Ascending aorta (tissue), 2 donors: ENCODE measurements at regions of chr22 and their contacts with region 1.

Region 1: GRCh38 chr22:31080848-31081649 is at the start of gene SMTN:
- DNase-seq: peak; percentile 63 to 96
- H3K4me3 ChIP-seq: peak within 1 kb of the TSS; percentile 70 to 89
- H3K27ac ChIP-seq: peak within 1 kb of the TSS; percentile 98
- H3K4me1 ChIP-seq: peaks cover 10 to 26% of the 10 kb centered on the region in 2 donors
- H3K27me3 ChIP-seq: no peaks in the 10 kb centered on the region
- CTCF ChIP-seq: no peak
- total RNA-seq, gene SMTN: 671 TPM

Region 2: DNA sequence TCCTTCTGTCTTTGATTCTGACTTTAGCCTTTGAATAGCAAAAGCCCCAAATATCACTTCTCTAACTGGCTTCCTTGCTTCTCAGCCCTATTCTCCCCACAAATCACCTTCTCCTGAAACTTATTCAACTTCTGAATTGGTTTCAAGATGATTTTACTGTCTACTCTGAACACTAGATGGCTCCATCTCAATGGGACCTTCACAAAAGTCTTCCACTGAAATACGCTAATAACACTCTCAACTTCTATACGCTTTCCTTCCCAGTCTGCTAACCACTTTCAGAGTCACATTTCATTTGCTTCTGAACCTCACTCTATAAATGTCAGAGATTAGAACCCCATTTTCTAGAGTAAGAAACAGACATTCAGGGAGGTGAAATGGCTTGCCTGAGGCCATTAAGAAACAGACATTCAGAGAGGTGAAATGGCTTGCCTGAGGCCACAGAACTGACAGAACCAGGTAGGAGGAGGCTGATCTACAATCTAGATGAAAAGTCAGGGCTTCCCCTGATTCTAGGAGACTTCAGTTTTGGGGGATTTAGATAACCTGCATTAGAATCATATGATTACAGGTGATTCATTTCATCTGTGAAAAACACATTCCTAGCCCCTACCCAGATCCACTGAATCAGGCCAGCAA is 133.1 kb before region 1 on chr22:
- intact Hi-C with region 1: loop called (anchors 1 kb)
- DNase-seq: no peak
- H3K4me3 ChIP-seq: peak overlapping the region in 1 of 2 donors; percentile 10
- H3K27ac ChIP-seq: peak overlapping the region; percentile 88 to 96
- H3K4me1 ChIP-seq: peaks cover 21 to 85% of the 10 kb centered on the region in 2 donors
- H3K27me3 ChIP-seq: no peaks in the 10 kb centered on the region
- CTCF ChIP-seq: peak; percentile 49 to 64 (median 59)

Region 3: GRCh38 chr22:30968924-30969539 is 112.0 kb before region 1 on chr22 and contains the start of gene TUG1:
- intact Hi-C with region 1: loop called (anchors 1 kb)
- DNase-seq: peak; percentile 97 to 99
- H3K4me3 ChIP-seq: peak within 1 kb of the TSS; percentile 84 to 96
- H3K27ac ChIP-seq: peak within 1 kb of the TSS; percentile 96
- H3K4me1 ChIP-seq: peaks cover 4 to 16% of the 10 kb centered on the region in 2 donors
- H3K27me3 ChIP-seq: no peaks in the 10 kb centered on the region
- CTCF ChIP-seq: no peak
- total RNA-seq, gene TUG1: 46.2 TPM

Region 4: GRCh38 chr22:31036671-31037550 is 44.1 kb before region 1 on chr22:
- intact Hi-C with region 1: loop called (anchors 2 kb)
- DNase-seq: peak in 1 of 2 donors; percentile 81
- H3K4me3 ChIP-seq: peak overlapping the region in 1 of 2 donors; percentile 40
- H3K27ac ChIP-seq: peak overlapping the region; percentile 87 to 89
- H3K4me1 ChIP-seq: peaks cover 14 to 43% of the 10 kb centered on the region in 2 donors
- H3K27me3 ChIP-seq: no peaks in the 10 kb centered on the region
- CTCF ChIP-seq: peak in 1 of 3 experiments; percentile 10

Region 5: DNA sequence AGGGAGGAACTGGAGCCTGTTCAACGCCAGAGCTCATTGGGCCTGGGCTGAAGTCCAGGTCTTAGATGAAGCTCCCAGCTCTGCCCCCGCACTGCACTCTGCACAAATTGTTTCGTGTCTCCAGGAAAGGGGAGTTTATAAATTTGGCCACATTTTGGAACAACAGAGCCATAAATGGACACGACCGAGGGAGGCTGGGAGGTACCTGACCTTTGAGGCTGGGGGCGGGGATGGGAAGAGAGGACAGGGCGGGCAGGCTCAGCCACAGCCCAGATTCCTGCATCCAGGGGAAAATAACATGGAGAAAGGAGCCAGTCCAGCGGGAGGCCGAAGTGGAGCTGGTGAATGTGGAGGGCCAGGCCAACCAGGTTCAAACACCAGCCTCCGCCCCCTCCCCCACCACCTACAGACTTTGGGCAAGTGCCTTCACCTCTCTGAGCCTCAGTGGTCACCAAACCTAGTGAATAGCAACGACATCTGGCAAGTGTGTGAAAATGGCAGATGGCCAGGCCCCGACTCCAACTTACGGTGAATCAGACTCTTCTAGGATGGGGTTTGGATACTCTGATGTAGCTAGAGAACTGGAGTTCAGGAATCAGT is 36.7 kb before region 1 on chr22:
- intact Hi-C with region 1: loop called (anchors 1 kb)
- DNase-seq: peak; percentile 30 to 92
- H3K4me3 ChIP-seq: peak overlapping the region in 1 of 2 donors; percentile 21
- H3K27ac ChIP-seq: peak overlapping the region; percentile 79 to 80
- H3K4me1 ChIP-seq: peaks cover 12 to 28% of the 10 kb centered on the region in 2 donors
- H3K27me3 ChIP-seq: no peaks in the 10 kb centered on the region
- CTCF ChIP-seq: no peak

Region 6: GRCh38 chr22:31055635-31056159 is 25.4 kb before region 1 on chr22:
- intact Hi-C with region 1: loop called (anchors 1 kb)
- DNase-seq: peak; percentile 76 to 97
- H3K4me3 ChIP-seq: no peak overlapping the region
- H3K27ac ChIP-seq: peak overlapping the region; percentile 89 to 91
- H3K4me1 ChIP-seq: peaks cover 6 to 32% of the 10 kb centered on the region in 2 donors
- H3K27me3 ChIP-seq: no peaks in the 10 kb centered on the region
- CTCF ChIP-seq: no peak

Region 7: GRCh38 chr22:31148953-31149627 is 68.0 kb after region 1 on chr22:
- intact Hi-C with region 1: loop called (anchors 2 kb)
- DNase-seq: peak in 1 of 2 donors; percentile 87
- H3K4me3 ChIP-seq: no peak overlapping the region
- H3K27ac ChIP-seq: peak overlapping the region; percentile 71 to 81
- H3K4me1 ChIP-seq: peaks cover 5 to 13% of the 10 kb centered on the region in 2 donors
- H3K27me3 ChIP-seq: no peaks in the 10 kb centered on the region
- CTCF ChIP-seq: peak; percentile 90 to 93 (median 90)

Region 8: DNA sequence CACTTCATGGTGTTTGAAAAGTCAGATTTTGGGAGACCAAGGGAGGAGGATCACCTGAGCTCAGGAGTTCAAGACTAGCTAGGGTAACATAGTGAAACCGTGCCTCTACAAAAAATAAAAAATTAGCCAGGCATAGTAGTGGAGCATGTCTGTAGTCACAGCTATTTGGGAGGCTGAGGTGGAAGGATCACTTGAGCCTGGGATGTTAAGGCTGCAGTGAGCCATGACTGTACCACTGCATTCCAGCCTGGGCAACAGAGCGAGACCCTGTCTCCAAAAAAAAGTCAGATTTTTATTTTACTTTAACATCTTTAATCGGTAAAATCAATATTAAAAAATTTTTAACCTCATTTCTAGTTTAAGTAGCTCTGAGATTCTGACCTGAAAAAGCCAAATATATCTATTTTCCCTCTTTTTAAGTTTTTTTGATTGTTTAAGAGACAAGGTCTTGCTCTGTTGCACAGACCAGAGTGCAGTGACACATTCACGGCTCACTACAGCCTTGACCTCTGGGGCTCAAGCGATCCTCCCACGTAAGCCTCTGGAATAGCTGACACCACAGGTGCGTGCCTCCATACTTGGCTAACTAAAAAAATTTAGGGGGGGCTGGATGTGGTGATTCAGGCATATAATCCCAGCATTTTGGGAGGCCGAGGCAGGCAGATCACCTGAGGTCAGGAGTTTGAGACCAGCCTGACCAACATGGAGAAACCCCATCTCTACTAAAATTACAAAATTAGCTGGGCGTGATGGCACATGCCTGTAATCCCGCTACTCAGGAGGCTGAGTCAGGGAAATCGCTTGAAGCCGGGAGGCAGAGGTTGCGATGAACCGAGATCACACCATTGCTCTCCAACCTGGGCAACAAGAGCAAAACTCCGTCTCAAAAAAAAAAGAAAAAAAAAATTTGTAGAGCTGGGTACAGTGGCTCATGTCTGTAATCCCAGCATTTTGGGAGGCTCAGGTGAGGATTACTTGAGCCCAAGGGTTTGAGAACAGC is 463.7 kb after region 1 on chr22:
- intact Hi-C with region 1: no loop called
- DNase-seq: no peak
- H3K4me3 ChIP-seq: no peak overlapping the region
- H3K27ac ChIP-seq: no peak overlapping the region
- H3K4me1 ChIP-seq: no peaks in the 10 kb centered on the region
- H3K27me3 ChIP-seq: no peaks in the 10 kb centered on the region
- CTCF ChIP-seq: no peak